Dendritic cell treated with granulocyte-macrophage colony-stimulating factor and Interleukin-4, amounts not matched to agents 40 ng/mL and 50 ng/mL, for 4 days (primary cell): ENCODE measurements at regions of chr12 and their contacts with region 1.

Region 1: GRCh38 chr12:40261937-40262336 is 37.1 kb downstream of the LRRK2 start:
- H3K4me3 Mint-ChIP-seq: no peak overlapping the region
- H3K27ac Mint-ChIP-seq: no peak overlapping the region
- H3K4me1 Mint-ChIP-seq: peaks cover 27% of the 10 kb centered on the region
- H3K27me3 Mint-ChIP-seq: peaks cover 44% of the 10 kb centered on the region

Region 2: GRCh38 chr12:40152783-40153383 is 109.1 kb before region 1 on chr12:
- intact Hi-C with region 1: loop called (anchors 5 kb)
- H3K4me3 Mint-ChIP-seq: no peak overlapping the region
- H3K27ac Mint-ChIP-seq: no peak overlapping the region
- H3K4me1 Mint-ChIP-seq: peaks cover 38% of the 10 kb centered on the region
- H3K27me3 Mint-ChIP-seq: peaks cover 30% of the 10 kb centered on the region

Region 3: DNA sequence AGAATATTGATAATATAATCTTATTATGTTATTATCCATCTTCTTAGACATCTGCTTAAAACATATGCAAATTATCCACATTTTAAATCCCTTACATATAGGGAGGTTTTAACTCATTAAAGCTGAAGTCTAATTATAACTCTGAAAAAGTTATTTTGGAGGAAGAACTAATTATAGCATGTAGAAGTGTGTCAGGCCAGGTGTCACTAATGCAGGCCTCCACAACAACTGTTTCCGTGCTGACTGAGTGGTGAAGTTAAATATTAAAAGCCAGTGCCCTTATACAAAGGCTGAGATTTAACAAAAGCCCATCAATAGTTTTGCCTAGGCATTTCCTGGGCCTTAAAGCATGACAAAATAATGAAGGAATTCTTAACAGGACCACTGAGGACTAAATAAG is 120.3 kb after region 1 on chr12:
- intact Hi-C with region 1: no loop called
- H3K4me3 Mint-ChIP-seq: no peak overlapping the region
- H3K27ac Mint-ChIP-seq: no peak overlapping the region
- H3K4me1 Mint-ChIP-seq: no peaks in the 10 kb centered on the region
- H3K27me3 Mint-ChIP-seq: no peaks in the 10 kb centered on the region